ENCODE measurements at regions of chr5 and their contacts with region 1.

Region 1: DNA sequence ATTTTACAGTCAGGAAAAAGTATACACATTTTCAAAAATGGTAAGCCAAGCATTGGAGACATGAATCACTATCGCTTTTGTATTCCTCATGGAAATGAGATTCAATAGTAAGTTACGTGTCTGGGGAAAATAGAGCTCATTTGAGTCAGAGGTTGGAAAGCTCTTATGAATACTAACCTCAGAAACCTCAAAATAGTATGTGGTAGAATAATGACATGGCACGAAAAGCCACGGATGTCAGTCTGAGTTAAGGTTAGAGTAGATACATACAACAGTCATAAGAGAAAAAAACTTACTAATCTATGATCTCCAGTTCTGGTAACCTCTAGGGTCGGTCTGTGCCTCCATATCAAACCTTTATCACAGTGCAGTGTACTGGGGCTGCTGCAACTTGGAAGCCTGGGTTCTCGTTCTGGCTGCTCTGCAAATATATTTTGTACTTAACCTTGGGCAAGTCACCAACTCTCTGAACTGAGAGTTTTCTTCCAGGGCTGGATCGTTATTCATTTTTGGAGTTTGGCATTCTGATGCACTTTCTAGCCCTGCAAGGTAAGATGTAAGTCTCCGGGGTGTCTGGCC is 31.8 kb downstream of the MAP1B start:
- DNase-seq: no peak
- H3K4me3 Mint-ChIP-seq: no peak overlapping the region
- H3K27ac Mint-ChIP-seq: no peak overlapping the region
- H3K4me1 Mint-ChIP-seq: peaks cover 12% of the 10 kb centered on the region
- H3K27me3 Mint-ChIP-seq: peaks cover 35% of the 10 kb centered on the region

Region 2: DNA sequence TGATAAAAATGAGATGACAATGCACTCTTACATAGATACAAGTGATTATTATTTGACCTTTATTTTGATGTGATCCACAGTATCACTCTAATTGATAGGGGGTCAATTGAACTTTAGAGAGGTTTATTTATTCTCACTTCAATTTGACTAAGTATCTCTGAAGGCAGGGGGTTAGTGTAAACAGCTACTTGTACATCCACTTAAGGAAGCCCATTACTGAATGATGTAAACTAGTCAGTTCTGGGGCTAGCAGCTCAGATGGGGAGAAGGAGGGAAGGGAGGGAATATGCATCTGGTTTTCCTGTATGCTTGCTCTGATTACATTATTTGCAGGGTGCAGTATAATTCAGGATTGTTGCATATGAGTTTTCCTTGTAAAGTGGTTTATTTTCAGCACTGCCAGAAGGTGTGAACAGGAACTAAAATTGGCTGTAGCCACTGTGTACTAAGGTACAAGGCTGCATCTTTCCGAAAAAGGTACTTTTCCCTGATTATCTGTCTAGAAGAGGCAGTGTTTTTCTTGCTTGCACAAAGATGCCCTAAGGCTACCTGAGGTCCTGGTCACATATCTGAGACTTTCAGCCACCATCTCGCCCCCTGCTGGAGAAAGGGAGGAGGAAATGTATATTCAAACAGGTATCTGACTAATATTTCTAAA is 129.8 kb after region 1 on chr5:
- intact Hi-C with region 1: loop called (anchors 1 kb)
- DNase-seq: peak; percentile 4
- H3K4me3 Mint-ChIP-seq: no peak overlapping the region
- H3K27ac Mint-ChIP-seq: no peak overlapping the region
- H3K4me1 Mint-ChIP-seq: no peaks in the 10 kb centered on the region
- H3K27me3 Mint-ChIP-seq: no peaks in the 10 kb centered on the region

Region 3: DNA sequence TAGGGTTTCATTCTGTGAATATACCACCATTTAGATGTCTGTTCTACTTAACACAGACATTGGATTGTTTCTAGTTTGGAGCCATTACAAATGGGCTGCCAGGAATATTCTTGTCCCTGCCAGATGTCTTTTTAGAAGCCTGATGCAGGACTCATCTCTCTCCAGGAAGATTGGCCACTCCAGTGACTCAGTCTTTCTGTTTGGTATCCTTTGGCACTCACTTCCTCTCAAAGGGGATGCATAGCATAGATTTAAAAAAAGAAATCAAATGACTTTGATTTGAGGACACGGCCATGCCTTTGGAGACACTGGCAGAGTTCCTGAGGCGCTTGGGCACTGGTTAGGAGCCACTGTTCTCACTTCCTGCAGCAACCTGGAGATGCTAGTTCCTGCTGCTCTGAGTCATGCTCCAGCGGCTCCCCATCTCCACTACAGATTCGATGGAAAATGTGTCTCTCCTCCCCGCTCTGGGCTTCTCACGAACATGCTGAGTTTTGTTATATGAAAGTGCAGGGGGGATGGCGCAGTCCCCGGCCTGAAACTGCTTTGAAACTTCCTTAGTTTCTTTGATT is 371.7 kb after region 1 on chr5:
- intact Hi-C with region 1: no loop called
- DNase-seq: no peak
- H3K4me3 Mint-ChIP-seq: no peak overlapping the region
- H3K27ac Mint-ChIP-seq: no peak overlapping the region
- H3K4me1 Mint-ChIP-seq: no peaks in the 10 kb centered on the region
- H3K27me3 Mint-ChIP-seq: peaks cover 12% of the 10 kb centered on the region